Tibial artery (tissue), 4 donors: ENCODE measurements at regions of chr4 and their contacts with region 1.

Region 1: DNA sequence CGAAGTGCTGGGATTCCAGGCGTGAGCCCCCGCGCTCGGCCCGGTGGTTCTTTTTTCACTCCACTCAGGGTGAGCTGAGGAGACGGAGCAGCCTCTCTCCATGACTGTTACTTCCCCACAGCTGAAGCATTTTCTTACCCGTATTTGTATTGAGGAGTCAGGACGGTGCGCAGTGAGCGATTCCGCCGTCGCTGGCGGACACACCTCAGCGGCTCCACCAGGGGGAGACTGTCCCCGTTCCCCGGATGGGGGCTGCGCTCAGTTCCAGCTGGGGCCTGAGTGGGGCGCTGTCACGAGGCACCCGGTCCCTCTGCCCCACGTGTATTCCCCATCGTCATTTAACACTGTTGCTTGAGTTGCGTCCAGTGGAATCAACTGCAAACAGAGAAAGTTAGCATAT is 844.0 kb upstream of the FRG1 start:
- DNase-seq: no peak
- H3K4me3 ChIP-seq: no peak overlapping the region
- H3K27ac ChIP-seq: no peak overlapping the region
- H3K4me1 ChIP-seq: no peaks in the 10 kb centered on the region
- H3K27me3 ChIP-seq: no peaks in the 10 kb centered on the region
- CTCF ChIP-seq: no peak

Region 2: DNA sequence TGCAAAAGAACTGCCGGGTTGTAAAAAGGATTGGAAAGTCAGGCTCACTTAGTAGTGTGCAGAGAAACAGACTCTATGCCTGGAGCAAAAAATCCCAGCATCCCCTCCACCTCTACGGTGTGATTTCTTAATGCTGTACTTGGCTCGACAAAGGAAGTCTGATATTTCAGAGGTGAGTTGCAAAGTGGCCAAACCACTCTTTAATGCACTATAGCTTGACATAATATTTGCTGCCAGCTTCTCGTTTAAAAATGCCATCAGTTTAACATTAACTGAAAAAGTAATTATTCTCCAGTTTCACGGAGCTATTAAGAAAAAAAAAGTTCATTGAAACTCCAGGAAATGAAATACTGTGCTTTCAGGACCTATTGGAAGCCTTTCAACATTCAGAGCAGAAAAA is 1549.4 kb before region 1 on chr4:
- intact Hi-C with region 1: loop called (anchors 10 kb)
- DNase-seq: no peak
- H3K4me3 ChIP-seq: peak overlapping the region in 1 of 2 donors; percentile 29
- H3K27ac ChIP-seq: no peak overlapping the region
- H3K4me1 ChIP-seq: no peaks in the 10 kb centered on the region
- H3K27me3 ChIP-seq: no peaks in the 10 kb centered on the region
- CTCF ChIP-seq: no peak

Region 3: DNA sequence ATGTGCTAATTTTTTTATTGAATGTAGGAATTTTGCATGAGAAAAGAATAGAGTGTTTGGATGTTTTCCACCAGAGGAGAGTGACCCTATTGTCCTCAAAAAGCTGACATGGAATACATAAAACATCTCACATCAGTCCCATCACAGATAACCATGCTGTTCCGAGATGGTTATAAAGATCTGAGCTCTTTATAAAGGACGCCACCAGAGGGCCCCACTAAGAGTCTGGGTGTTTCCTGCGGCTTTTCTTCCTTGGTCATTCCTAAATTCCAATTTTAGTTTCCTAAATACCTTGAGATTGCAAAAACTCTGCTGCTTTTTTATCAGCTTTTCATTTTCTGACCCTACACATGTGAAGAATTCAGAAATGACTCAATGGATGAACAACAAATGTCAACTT is 339.5 kb after region 1 on chr4:
- intact Hi-C with region 1: no loop called
- DNase-seq: no peak
- H3K4me3 ChIP-seq: no peak overlapping the region
- H3K27ac ChIP-seq: no peak overlapping the region
- H3K4me1 ChIP-seq: no peaks in the 10 kb centered on the region
- H3K27me3 ChIP-seq: no peaks in the 10 kb centered on the region
- CTCF ChIP-seq: no peak